ENCODE measurements at regions of chr1 and their contacts with region 1.

Region 1: DNA sequence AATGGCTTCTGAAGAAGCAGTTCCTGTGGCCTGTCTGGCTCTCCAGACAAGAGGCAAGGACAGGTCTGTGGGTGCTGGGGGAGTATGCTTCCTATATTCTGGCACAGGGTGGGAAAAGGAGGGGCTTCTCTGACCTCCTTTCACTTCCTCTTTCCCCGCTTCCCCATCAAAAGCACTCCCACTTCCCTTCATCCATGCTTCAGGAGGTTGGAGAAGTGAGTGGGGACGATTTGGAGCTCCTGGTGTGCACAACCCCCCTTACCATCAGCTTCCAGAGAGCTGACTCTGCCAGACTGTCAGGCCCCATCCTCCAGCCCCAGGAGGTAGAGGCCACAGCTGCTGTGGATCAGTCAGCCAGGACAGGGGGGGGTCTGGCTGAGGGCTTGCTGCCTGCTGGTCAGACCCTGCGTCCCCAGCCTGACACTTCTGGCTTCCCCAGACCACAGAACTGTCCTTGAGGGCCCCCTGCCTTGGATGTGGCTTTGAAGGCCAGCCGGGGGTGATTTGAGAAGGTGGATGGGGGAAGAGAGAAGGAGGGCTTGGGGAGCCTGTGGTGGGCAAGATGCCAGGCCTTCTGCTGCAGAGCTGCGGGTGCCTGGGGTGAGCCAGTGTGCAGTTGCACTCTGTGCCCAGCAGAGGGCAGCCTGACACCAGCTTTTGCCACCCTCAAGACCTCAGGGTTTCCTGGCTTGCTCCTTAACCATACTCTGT is 21.5 kb upstream of the TMEM222 start:
- DNase-seq: peak; percentile 79
- ATAC-seq: peak; percentile 83
- H3K4me3 Mint-ChIP-seq: no peak overlapping the region
- H3K27ac Mint-ChIP-seq: no peak overlapping the region
- H3K4me1 Mint-ChIP-seq: peaks cover 9% of the 10 kb centered on the region
- H3K27me3 Mint-ChIP-seq: no peaks in the 10 kb centered on the region

Region 2: DNA sequence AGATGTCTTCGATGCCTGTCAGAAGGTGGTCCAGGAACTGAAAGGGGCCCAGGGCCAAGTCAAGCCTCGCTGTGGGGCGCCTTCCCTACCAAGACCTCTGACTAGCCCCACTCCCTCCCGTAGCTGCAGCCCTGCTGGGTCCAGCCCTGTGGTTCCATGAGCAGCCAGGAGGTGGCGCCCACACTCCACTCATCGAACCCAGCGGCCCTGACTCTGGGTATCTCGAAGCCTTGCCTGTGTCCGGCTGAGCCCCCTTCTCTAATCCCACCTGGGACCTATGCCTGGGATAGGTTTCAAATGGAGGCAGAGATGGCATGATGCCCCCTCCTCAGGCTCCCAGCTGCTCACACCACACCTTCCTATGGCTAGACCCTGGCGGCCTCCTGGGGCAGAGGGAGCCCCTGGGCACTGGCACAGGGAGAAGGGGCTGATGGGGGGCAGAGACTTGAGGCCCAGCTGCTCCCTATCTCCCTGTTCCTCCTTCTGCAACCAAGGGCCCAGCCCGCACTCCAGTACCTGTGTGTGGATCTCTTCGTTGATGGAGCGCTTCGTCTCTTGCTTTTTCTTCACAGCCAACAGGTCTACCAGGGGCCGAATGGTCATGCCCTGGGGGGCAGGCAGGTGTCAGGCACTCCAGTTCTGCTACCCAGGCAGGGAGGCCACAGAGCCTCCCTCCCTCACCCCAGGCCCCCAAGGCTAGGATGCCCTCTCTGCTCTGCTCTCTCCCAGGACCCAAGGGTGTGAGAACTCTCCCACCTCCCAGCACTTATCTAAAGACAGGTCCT is 197.6 kb before region 1 on chr1:
- CTCF ChIA-PET with region 1: interaction called, 19 read pairs
- POLR2A ChIA-PET with region 1: interaction called, 3 read pairs
- DNase-seq: peak; percentile 84
- ATAC-seq: peak; percentile 74
- H3K4me3 Mint-ChIP-seq: no peak overlapping the region
- H3K27ac Mint-ChIP-seq: peak overlapping the region; percentile 41
- H3K4me1 Mint-ChIP-seq: peaks cover 20% of the 10 kb centered on the region
- H3K27me3 Mint-ChIP-seq: no peaks in the 10 kb centered on the region

Region 3: GRCh38 chr1:27241677-27242076 is 58.8 kb before region 1 on chr1:
- CTCF ChIA-PET with region 1: interaction called, 10 read pairs
- POLR2A ChIA-PET with region 1: no interaction called
- DNase-seq: no peak
- ATAC-seq: no peak
- H3K4me3 Mint-ChIP-seq: no peak overlapping the region
- H3K27ac Mint-ChIP-seq: no peak overlapping the region
- H3K4me1 Mint-ChIP-seq: peaks cover 5% of the 10 kb centered on the region
- H3K27me3 Mint-ChIP-seq: no peaks in the 10 kb centered on the region

Region 4: GRCh38 chr1:27284425-27285273 is 15.8 kb before region 1 on chr1:
- CTCF ChIA-PET with region 1: interaction called, 27 read pairs
- POLR2A ChIA-PET with region 1: no interaction called
- DNase-seq: peak; percentile 93
- ATAC-seq: peak; percentile 98
- H3K4me3 Mint-ChIP-seq: no peak overlapping the region
- H3K27ac Mint-ChIP-seq: no peak overlapping the region
- H3K4me1 Mint-ChIP-seq: peaks cover 6% of the 10 kb centered on the region
- H3K27me3 Mint-ChIP-seq: no peaks in the 10 kb centered on the region

Region 5: GRCh38 chr1:27357281-27358037 is 57.0 kb after region 1 on chr1:
- CTCF ChIA-PET with region 1: interaction called, 27 read pairs
- POLR2A ChIA-PET with region 1: interaction called, 5 read pairs
- DNase-seq: peak; percentile 90
- ATAC-seq: peak; percentile 82
- H3K4me3 Mint-ChIP-seq: peak overlapping the region; percentile 78
- H3K27ac Mint-ChIP-seq: peak overlapping the region; percentile 97
- H3K4me1 Mint-ChIP-seq: peaks cover 48% of the 10 kb centered on the region
- H3K27me3 Mint-ChIP-seq: peaks cover 9% of the 10 kb centered on the region

Region 6: DNA sequence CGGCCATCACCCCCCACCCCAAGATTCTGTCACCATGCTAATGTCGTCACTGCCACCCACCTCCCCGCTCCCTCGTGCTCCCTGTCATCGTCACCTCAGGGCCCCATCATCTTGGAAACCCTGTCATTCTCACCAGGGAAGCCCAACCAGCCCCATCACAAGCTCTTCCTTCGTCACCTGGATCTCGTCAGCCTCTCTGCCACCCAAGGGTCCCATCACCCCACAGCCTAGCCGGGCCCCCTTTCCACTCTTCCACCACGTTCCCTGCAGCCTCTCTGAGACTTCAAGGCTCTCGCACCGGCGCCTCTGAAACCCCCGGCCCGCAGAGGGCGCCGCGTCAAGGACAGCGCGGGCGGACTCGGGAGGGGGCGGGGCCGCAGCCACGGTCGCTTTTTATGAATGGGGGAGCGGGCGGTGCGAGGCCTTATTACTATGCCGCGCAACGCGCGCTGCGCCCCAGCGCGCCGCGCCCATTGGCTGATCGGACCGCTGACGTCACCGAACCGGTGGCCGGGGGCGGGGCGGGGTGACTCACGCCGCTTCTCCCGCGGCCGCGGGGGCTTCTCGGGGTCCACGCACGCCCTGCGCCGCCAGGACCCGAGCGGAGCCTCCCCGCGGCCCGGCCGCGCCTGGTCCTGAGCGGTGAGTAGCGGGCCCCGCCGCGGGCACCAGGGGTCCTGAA is 91.7 kb after region 1 on chr1 and contains the start of gene GPR3:
- CTCF ChIA-PET with region 1: interaction called, 266 read pairs
- POLR2A ChIA-PET with region 1: interaction called, 3 read pairs
- DNase-seq: peak; percentile 95
- ATAC-seq: peak; percentile 94
- H3K4me3 Mint-ChIP-seq: peak within 1 kb of the TSS; percentile 74
- H3K27ac Mint-ChIP-seq: peak within 1 kb of the TSS; percentile 82
- H3K4me1 Mint-ChIP-seq: peaks cover 25% of the 10 kb centered on the region
- H3K27me3 Mint-ChIP-seq: peaks cover 12% of the 10 kb centered on the region
- total RNA-seq, gene GPR3: 0.47 to 0.66 TPM

Region 7: DNA sequence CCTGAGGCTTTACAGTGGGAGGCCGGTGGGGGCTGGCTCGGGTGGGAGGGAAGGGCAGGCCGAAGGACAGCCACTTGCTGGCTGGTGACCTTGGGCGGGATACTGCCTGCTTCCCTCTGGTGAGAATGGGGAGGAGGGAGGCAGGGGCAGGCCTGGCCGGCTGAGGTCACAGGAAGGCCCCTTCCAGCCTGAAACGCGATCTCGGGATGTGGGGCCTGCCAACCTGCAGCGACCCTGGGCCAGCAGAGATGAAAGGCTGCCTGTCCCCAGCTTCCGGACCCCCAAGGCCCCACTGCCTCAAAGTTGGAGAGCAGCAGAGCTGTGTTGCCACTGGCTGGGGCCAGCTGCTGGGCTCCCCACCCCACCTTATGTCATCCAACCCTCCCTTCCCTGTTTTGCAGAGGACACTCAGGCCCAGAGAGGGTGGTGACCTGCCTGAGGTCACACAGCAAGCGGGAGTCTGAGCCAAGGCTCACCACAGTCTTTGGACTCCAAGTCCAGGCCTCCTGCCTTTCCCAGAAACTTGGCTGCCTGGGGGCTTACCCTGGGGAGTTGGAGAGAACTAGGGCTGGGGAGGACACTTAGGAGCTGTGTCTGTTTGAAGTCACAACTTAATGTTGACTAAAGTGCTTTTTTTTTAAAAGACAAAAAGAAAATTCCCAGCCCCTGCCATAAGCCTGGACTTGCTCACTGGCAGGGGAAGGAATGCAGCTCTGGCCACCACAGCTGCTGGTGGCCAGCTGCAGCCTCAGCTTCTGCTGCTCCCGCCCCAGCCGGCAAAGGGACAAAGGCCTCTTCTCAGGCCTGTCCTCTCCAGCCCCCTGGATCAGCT is 204.3 kb after region 1 on chr1:
- CTCF ChIA-PET with region 1: no interaction called
- POLR2A ChIA-PET with region 1: no interaction called
- DNase-seq: no peak
- ATAC-seq: no peak
- H3K4me3 Mint-ChIP-seq: no peak overlapping the region
- H3K27ac Mint-ChIP-seq: no peak overlapping the region
- H3K4me1 Mint-ChIP-seq: no peaks in the 10 kb centered on the region
- H3K27me3 Mint-ChIP-seq: no peaks in the 10 kb centered on the region

Region 8: GRCh38 chr1:27536767-27537166 is 236.3 kb after region 1 on chr1:
- CTCF ChIA-PET with region 1: no interaction called
- POLR2A ChIA-PET with region 1: no interaction called
- DNase-seq: no peak
- ATAC-seq: no peak
- H3K4me3 Mint-ChIP-seq: no peak overlapping the region
- H3K27ac Mint-ChIP-seq: no peak overlapping the region
- H3K4me1 Mint-ChIP-seq: peaks cover 24% of the 10 kb centered on the region
- H3K27me3 Mint-ChIP-seq: no peaks in the 10 kb centered on the region

Region 9: DNA sequence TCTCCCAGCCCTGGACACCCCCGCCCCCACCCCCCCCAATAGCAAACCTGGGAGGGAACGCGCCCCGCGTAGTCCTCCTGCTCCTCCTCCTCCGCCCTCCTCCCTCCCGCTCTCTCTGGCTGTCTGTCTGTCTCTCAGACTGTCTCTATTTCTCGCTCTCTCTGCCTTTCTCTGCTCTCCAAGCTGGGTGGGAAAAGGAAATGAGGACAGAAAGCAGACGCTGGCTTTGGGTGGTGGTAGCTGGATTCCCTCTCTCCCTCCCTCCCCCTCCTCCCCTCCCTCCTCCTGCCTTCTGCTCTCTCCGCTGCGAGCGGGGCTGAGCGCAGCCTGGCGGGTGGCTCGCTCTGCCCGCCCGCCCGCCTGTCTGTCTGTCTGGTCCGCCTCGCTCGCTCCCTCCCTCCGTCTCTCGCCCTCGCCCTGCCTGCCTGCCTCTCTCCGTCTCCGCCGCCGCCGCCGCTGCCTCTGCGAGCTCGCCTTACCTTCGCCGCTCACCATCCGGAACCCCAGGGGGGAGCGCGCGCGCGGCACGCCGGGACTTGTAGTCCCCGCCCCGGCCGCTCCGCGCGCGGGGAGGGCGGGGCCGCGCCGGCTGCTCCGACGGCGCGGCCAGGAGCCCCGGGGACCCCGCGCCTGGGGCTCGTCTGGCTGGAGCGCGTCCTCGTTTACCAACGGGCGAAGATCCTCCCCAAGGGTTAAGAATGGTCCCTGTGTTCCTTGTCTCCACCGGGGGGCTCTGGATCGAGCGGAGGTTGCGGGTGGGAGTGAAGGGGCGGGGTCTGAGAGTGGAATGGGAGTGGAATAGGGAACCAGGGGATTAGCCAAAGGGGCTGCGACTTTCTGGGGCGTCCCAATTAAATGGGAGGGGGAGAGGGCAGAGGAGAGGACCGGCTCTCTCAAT is 303.4 kb after region 1 on chr1 and contains the start of gene AHDC1:
- CTCF ChIA-PET with region 1: interaction called, 84 read pairs
- POLR2A ChIA-PET with region 1: no interaction called
- DNase-seq: peak; percentile 94
- ATAC-seq: peak; percentile 88
- H3K4me3 Mint-ChIP-seq: peak within 1 kb of the TSS; percentile 88
- H3K27ac Mint-ChIP-seq: peak within 1 kb of the TSS; percentile 82
- H3K4me1 Mint-ChIP-seq: peaks cover 45% of the 10 kb centered on the region
- H3K27me3 Mint-ChIP-seq: no peaks in the 10 kb centered on the region
- total RNA-seq, gene AHDC1: 20.9 to 22.7 TPM

Measured in activated CD8-positive, alpha-beta T cell treated with anti-CD3 and anti-CD28 coated beads, Interleukin-2, amount 10 ng/mL, durations not matched to agents 7 days and 5 days (primary cell).